Activated CD8-positive, alpha-beta memory T cell treated with anti-CD3 and anti-CD28 coated beads, Interleukin-2, amount 10 ng/mL, durations not matched to agents 7 days and 5 days (primary cell): ENCODE measurements at regions of chr22 and their contacts with region 1.

Region 1: GRCh38 chr22:46013460-46014416 is 36.8 kb upstream of the WNT7B start:
- DNase-seq: peak; percentile 90
- ATAC-seq: peak; percentile 99
- H3K4me3 Mint-ChIP-seq: peak overlapping the region; percentile 78
- H3K27ac Mint-ChIP-seq: peak overlapping the region; percentile 82
- H3K4me1 Mint-ChIP-seq: peaks cover 6% of the 10 kb centered on the region
- H3K27me3 Mint-ChIP-seq: peaks cover 2% of the 10 kb centered on the region

Region 2: DNA sequence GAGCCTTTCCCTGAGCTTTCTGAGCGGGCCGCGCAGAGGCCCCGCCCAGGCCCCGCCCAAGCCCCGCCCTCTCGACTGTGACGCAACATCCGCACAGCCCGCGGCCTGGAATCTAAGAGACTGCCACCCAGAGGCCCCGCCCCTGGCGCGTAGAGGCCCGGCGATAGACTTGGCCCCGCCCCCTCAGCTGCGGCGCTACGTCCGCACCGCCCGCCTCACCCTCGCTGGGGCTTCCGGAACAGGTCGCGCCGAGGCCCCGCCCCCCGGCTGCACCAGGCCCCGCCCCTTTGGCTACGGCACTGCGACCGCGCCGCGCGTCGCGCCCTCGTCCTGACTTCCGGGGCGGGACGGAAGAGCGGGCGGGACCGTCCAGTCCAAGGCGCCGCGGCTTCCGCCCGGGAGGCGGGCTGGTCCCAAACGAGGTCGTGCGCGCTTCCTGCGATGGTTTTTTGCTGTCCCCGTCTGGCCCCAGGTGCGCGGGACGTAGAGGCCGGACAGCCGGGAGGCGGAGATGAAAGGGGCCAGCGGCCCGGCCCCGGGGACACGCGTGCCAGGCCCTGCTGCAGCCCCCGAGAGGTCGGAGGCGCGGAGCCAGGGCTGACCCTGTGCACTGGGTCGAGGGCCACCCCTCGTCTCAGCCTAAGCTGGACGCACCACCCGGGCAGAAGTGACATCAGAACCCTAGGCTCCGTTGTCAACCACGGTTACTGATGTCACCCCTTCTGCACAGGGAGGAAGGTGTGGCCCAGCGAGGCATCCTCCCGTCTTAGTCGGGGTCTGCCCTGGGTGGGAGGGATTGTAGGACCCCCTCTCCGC is 22.2 kb after region 1 on chr22:
- CTCF ChIA-PET with region 1: interaction called, 68 read pairs
- DNase-seq: peak; percentile 100
- ATAC-seq: peak; percentile 93
- H3K4me3 Mint-ChIP-seq: peak overlapping the region; percentile 76
- H3K27ac Mint-ChIP-seq: peak overlapping the region; percentile 90
- H3K4me1 Mint-ChIP-seq: peaks cover 13% of the 10 kb centered on the region
- H3K27me3 Mint-ChIP-seq: no peaks in the 10 kb centered on the region